ENCODE measurements at regions of chr10 and their contacts with region 1.

Region 1: DNA sequence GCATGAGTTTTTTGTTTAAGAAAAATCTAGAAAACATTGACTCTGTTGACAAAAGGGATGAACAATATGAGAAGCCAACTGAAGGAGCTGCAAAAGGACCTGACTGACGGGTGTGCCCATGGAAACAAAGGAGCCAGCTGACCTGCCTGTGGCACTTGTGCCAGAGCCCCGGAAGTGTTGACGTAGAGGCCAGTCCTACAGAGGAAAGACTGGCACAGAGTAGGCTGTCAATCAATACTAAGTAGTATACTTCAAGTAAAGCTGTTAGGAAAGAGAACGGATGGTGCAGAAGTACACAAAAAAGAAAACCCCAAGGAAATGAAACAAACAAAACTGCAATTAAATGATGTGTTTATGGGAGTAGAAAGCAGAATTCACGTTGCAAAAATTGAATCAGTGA is 19.0 kb upstream of the ABI1 start:
- DNase-seq: no peak
- H3K4me3 ChIP-seq: no peak overlapping the region
- H3K27ac ChIP-seq: no peak overlapping the region
- H3K4me1 ChIP-seq: no peaks in the 10 kb centered on the region
- H3K27me3 ChIP-seq: no peaks in the 10 kb centered on the region
- CTCF ChIP-seq: no peak

Region 2: DNA sequence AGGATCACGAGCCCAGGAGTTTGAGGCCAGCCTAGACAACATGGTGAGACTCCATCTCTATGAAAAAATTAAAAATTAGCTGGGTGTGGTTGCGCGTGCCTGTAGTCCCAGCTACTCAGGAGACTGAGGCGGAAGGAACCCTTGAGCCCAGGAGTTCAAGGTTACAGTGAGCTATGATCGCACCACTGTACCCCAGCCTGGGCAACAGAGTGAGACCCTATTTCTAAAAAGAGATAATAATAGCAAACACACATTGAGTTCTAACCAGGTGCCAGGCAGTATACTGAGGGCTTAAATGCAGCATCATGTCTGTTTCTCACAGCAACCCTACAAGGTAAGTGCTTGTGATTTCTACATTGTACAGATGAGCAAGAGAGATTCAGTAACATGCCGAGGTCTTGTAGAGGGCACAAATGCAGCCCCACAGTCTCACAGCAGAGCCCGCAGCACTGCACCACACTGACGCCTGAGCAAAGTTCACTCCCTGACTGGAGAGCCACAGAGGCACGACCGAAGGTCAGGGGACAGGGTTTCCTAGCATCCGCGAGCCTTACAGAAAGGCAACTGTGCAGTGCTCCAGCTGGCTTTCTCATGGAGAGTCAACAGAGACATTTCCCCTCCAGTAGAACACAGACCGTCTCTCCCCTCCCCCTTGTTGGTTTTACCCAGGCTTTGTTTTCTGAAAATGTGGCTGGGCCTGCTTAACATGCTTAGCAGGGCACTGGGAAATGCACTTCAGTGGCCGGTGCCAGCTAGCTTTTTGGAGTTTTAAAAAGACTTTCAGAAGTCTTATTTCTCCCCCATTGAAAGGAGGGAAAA is 145.8 kb before region 1 on chr10:
- intact Hi-C with region 1: loop called (anchors 5 kb)
- DNase-seq: peak in 4 of 5 donors; percentile 36 to 57 (median 48)
- H3K4me3 ChIP-seq: peak overlapping the region in 1 of 3 donors; percentile 9
- H3K27ac ChIP-seq: no peak overlapping the region
- H3K4me1 ChIP-seq: peaks cover 0 to 15% (median 0%) of the 10 kb centered on the region in 3 donors
- H3K27me3 ChIP-seq: no peaks in the 10 kb centered on the region
- CTCF ChIP-seq: no peak

Region 3: DNA sequence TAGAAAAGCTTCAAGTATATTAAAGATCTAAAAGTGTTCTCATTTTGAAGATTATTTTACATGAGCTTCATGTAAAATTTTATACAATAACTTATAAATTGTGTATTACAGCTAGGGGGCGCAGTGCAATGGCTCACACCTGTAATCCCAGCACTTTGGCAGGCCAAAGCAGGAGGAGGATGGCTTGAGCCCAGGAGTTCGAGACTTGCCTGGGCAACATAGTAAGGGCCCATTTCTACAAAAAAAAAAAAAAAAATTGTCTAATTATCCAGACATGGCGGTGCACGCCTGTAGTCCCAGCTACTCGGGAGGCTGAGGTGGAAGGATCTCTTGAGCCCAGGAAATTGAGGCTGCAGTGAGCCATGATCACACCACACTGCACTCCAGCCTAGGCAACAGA is 344.2 kb after region 1 on chr10:
- intact Hi-C with region 1: no loop called
- DNase-seq: peak in 1 of 5 donors; percentile 49
- H3K4me3 ChIP-seq: no peak overlapping the region
- H3K27ac ChIP-seq: no peak overlapping the region
- H3K4me1 ChIP-seq: no peaks in the 10 kb centered on the region
- H3K27me3 ChIP-seq: no peaks in the 10 kb centered on the region
- CTCF ChIP-seq: peak; percentile 47

Region 4: DNA sequence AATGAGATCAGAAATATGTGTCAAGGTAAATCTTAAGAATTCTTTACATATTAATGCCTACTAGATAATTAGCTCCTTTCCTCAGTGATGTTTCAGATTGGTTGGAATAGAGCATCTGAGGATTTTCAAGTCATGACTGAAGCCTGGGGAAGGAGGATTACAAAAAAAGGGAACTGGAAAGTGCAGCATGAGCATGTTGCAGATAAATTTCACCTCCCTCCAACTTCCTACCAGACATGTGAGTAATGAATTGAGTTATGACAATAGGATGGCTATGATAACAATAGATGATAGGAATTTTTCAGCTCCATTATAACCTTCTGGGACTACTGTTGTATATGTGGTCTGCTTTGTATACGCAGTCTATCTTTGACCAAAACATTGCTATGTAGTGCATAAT is 520.1 kb after region 1 on chr10:
- intact Hi-C with region 1: no loop called
- DNase-seq: no peak
- H3K4me3 ChIP-seq: no peak overlapping the region
- H3K27ac ChIP-seq: no peak overlapping the region
- H3K4me1 ChIP-seq: no peaks in the 10 kb centered on the region
- H3K27me3 ChIP-seq: no peaks in the 10 kb centered on the region
- CTCF ChIP-seq: no peak

Region 5: DNA sequence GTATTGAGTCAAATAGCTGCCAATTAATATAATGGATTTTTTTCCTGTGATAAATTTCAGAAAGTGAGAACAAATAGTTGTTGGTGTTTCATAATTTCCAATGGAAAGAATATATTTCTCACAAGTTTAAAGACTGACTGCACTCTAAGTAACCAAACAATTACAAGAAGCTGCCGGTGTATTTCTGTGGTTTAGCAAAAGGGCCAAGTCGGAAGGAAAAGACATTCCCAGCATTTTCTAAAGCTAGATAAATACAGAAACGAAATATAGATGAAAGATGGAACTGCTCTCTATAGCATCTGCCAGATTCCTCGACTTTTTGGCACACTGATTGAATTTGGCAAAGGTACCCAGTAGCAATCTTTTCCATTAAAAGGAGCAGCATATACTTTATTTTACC is 958.6 kb after region 1 on chr10:
- intact Hi-C with region 1: no loop called
- DNase-seq: no peak
- H3K4me3 ChIP-seq: no peak overlapping the region
- H3K27ac ChIP-seq: no peak overlapping the region
- H3K4me1 ChIP-seq: no peaks in the 10 kb centered on the region
- H3K27me3 ChIP-seq: no peaks in the 10 kb centered on the region
- CTCF ChIP-seq: no peak

Measured in kidney (tissue), 22 donors.